ENCODE measurements at regions of chr1 and their contacts with region 1.

Region 1: DNA sequence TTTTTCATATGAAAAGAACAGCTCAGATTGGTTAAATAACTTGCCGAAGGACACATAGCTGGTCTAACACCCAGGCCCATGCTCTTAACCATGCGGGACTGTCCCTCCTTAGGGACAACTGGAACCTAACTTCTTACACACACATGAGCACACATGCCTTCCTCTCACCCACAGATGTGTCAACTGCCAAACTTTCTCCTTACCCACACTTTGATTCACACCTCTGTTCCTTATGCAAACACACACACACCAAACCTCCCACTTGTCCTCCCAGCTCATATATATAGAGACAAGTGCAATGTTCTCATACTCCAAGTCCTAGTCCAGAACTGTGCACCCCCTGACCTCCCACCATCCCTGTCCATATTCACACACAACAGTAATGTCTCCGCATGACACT is 4.3 kb downstream of the RAB25 start:
- DNase-seq: no peak
- H3K4me3 Mint-ChIP-seq: no peak overlapping the region
- H3K27ac Mint-ChIP-seq: peak overlapping the region; percentile 2
- H3K4me1 Mint-ChIP-seq: peaks cover 11% of the 10 kb centered on the region
- H3K27me3 Mint-ChIP-seq: peaks cover 2% of the 10 kb centered on the region

Region 2: DNA sequence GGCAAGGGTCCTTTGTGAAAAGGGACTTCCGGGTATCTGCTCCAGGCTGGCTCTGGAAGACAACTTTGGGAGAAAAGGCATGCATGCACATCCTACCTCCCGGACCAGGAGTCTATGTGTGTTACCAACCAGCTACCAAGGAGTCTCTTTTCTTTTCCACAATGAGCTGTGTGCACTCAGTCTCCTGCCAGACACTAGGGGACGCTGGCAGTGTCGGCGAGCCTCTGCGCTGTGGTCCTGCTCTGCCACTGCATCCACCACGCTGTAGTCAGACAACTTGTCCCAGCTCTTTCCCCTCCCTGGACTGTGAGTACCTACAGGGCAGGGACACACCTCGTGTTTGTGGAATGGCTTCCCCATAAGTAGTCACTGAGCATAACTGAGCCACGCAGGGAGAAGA is 39.3 kb before region 1 on chr1:
- intact Hi-C with region 1: loop called (anchors 1 kb)
- DNase-seq: peak; percentile 79
- H3K4me3 Mint-ChIP-seq: no peak overlapping the region
- H3K27ac Mint-ChIP-seq: no peak overlapping the region
- H3K4me1 Mint-ChIP-seq: peaks cover 10% of the 10 kb centered on the region
- H3K27me3 Mint-ChIP-seq: peaks cover 4% of the 10 kb centered on the region

Region 3: GRCh38 chr1:156980551-156980950 is 915.3 kb after region 1 on chr1:
- intact Hi-C with region 1: no loop called
- DNase-seq: no peak
- H3K4me3 Mint-ChIP-seq: no peak overlapping the region
- H3K27ac Mint-ChIP-seq: no peak overlapping the region
- H3K4me1 Mint-ChIP-seq: no peaks in the 10 kb centered on the region
- H3K27me3 Mint-ChIP-seq: peaks cover 47% of the 10 kb centered on the region